ENCODE measurements at regions of chr3 and their contacts with region 1.

Region 1: DNA sequence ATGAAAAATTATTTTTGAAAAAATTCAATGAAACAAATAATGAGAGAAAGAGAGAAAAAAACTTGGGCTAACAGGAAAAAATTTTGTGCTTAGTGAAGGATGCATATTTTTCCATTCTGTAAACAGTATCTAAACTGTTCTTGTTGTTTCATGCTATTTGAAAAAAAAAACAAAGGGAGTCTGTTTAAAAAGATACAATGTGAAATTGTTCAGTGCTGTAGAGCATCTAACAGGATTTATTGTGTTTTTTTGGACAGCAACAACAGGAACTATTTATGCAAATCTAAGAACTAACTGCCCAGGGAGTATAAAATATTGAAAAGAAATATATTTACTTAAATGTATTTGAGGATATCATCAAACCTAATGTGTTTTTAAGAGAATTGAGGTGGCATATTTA is 55.1 kb downstream of the PEX5L start:
- DNase-seq: no peak

Region 2: DNA sequence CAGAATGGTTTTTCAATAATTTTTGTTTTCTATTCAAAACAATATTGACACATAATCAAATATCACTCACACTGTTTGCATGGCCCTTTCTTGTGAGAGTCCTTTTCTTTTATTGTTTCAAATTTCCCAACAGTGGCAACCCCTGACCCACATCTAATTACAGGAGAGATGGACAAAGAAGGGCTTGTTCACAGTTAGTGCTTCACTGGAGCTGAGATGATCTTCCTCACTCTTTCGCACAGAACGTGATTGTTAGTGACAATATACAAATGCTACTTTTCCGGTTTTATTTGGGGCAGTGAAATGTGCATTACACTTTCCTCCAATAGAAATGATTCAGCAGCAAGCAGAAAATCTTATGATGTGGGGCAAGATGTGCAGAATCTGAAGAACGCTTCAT is 581.8 kb after region 1 on chr3:
- intact Hi-C with region 1: no loop called
- DNase-seq: no peak

Region 3: GRCh38 chr3:180626844-180627243 is 645.2 kb after region 1 on chr3:
- intact Hi-C with region 1: loop called in 1 of 2 experiments (anchors 5 kb)
- DNase-seq: no peak

Region 4: GRCh38 chr3:180898572-180898971 is 916.9 kb after region 1 on chr3:
- intact Hi-C with region 1: loop called in 1 of 2 experiments (anchors 5 kb)
- DNase-seq: no peak